HEK293 (cell line): ENCODE measurements at regions of chr2 and their contacts with region 1.

Region 1: GRCh38 chr2:218269899-218270720 is at the starts of genes AAMP and PNKD:
- H3K4me3 ChIP-seq: peak within 1 kb of the TSS; percentile 76
- H3K27ac ChIP-seq: peak within 1 kb of the TSS; percentile 72
- H3K4me1 ChIP-seq: peaks cover 3% of the 10 kb centered on the region; the same call in 1 of the 2 replicates
- CTCF ChIP-seq: peak; percentile 76

Region 2: DNA sequence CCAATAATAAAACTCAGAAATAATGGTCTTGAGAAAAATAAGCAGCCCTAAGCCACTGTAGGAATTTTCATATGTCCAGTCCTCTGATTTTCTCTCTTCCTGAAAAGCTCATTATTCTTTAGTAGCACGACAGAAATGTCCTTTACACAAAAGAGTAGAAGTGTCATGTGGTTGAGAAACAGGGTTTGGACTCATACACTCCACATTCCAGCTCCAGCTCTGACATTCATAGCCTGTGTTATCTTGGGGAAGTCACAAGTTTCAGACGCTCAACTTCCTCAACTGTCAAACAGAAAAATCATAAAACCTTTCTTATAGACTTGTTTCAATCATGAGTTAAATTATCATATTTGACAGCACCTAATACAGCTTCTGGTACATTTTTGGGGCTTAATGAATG is 778.8 kb before region 1 on chr2:
- CTCF ChIA-PET with region 1: no interaction called
- POLR2A ChIA-PET with region 1: no interaction called
- H3K4me3 ChIP-seq: no peak overlapping the region
- H3K27ac ChIP-seq: no peak overlapping the region
- H3K4me1 ChIP-seq: no peaks in the 10 kb centered on the region
- CTCF ChIP-seq: no peak

Region 3: GRCh38 chr2:218257390-218257981 is 12.6 kb before region 1 on chr2:
- CTCF ChIA-PET with region 1: interaction called, 10 read pairs
- POLR2A ChIA-PET with region 1: interaction called, 9 read pairs
- H3K4me3 ChIP-seq: no peak overlapping the region
- H3K27ac ChIP-seq: no peak overlapping the region
- H3K4me1 ChIP-seq: no peaks in the 10 kb centered on the region; the same call in 1 of the 2 replicates
- CTCF ChIP-seq: peak; percentile 57

Region 4: DNA sequence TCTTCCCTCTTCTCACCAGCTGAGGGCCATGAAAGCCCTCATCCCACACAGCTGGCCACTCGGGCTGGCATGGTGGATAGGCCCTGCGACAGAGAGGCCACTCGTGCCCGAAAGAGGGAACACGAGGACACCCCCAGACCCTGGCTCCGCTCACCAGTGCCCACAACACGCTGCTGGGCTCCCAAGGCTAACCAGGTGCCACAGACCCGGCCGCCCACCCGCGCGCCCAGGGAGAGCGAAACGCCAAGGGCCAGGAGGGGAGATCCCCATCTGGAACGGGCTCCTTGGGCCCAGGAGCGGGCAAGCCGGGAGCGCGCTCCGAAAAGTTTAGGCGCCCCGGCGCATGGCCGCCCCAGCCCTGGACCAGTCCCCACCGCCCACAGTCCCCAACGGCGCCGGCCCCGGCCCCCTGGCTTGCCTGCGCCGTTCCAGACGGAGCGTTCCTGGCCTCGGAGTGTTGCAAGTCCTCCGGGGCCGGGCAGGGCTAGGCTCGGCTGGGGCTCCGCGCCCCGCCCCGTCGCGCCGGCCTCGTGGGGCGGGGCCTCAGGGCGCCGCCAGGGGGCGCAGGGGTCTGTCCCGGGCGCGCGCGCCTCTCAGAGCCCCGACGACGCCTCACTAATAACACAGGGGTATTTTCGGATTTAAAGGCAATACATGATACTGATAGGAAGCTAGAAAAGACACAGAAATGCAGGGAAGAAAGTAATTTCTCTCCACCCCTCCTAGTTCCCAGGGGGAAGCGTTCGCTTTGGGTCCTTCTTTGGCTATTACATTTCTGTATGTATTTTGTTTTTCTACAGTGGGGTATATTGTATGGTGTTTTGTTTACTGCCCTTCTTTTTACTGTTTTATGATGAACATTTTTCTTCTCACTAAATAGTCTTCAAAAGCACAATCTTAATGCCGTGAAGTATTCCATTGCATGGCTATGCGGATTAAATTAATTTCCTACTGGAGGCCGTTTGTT is 22.2 kb after region 1 on chr2 and contains the start of gene TMBIM1:
- CTCF ChIA-PET with region 1: interaction called, 89 read pairs
- POLR2A ChIA-PET with region 1: interaction called, 29 read pairs
- H3K4me3 ChIP-seq: peak within 1 kb of the TSS; percentile 64
- H3K27ac ChIP-seq: peak within 1 kb of the TSS; percentile 27; the same call in 1 of the 2 replicates
- H3K4me1 ChIP-seq: peaks cover 3% of the 10 kb centered on the region; the same call in 1 of the 2 replicates
- CTCF ChIP-seq: peak; percentile 6; the same call in 1 of the 2 replicates

Region 5: GRCh38 chr2:218331745-218332144 is 61.6 kb after region 1 on chr2:
- CTCF ChIA-PET with region 1: interaction called, 3 read pairs
- POLR2A ChIA-PET with region 1: interaction called, 14 read pairs
- H3K4me3 ChIP-seq: no peak overlapping the region
- H3K27ac ChIP-seq: no peak overlapping the region
- H3K4me1 ChIP-seq: no peaks in the 10 kb centered on the region
- CTCF ChIP-seq: no peak

Region 6: GRCh38 chr2:218395797-218396687 is 125.9 kb after region 1 on chr2:
- CTCF ChIA-PET with region 1: interaction called, 13 read pairs
- POLR2A ChIA-PET with region 1: interaction called, 11 read pairs
- H3K4me3 ChIP-seq: peak overlapping the region; percentile 74
- H3K27ac ChIP-seq: peak overlapping the region; percentile 93
- H3K4me1 ChIP-seq: peaks cover 15% of the 10 kb centered on the region
- CTCF ChIP-seq: peak; percentile 96